MCF 10A (cell line): ENCODE measurements at regions of chr10 and their contacts with region 1.

Region 1: GRCh38 chr10:90817128-90817889 is 40.5 kb downstream of the HTR7 start:
- DNase-seq: peak; percentile 41
- H3K4me3 Mint-ChIP-seq: peak overlapping the region; percentile 0
- H3K27ac Mint-ChIP-seq: peak overlapping the region; percentile 59
- H3K4me1 Mint-ChIP-seq: peaks cover 28% of the 10 kb centered on the region
- H3K27me3 Mint-ChIP-seq: no peaks in the 10 kb centered on the region
- CTCF ChIP-seq: no peak

Region 2: DNA sequence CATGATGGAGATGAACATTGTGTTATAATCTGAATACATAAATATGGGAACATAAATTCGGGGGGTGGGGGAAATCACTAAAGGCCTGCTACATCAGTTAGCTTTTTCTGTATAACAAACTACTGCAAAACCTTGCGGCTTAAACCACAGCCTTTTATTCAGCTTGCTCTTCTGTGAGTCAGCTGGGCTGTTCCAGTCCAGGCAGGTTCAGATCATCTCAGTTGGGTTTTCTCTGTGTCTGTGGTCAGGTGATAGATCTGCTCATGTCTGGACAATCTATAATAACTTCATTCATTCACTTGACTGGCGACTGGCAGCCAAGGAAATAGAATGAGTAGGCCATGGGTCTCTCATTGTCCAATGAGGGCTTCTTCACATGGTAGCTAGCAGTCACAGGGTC is 17.0 kb after region 1 on chr10:
- CTCF ChIA-PET with region 1: interaction called, 7 read pairs
- POLR2A ChIA-PET with region 1: interaction called, 40 read pairs
- intact Hi-C with region 1: no loop called
- DNase-seq: peak; percentile 46
- H3K4me3 Mint-ChIP-seq: no peak overlapping the region
- H3K27ac Mint-ChIP-seq: peak overlapping the region; percentile 76
- H3K4me1 Mint-ChIP-seq: peaks cover 28% of the 10 kb centered on the region
- H3K27me3 Mint-ChIP-seq: no peaks in the 10 kb centered on the region
- CTCF ChIP-seq: no peak